ENCODE measurements at regions of chr10 and their contacts with region 1.

Region 1: GRCh38 chr10:117216611-117217195 is 19.4 kb downstream of the KCNK18 start:
- DNase-seq: no peak
- H3K4me3 ChIP-seq: peak overlapping the region; percentile 55
- H3K27me3 ChIP-seq: peaks cover 6% of the 10 kb centered on the region
- CTCF ChIP-seq: peak; percentile 100

Region 2: DNA sequence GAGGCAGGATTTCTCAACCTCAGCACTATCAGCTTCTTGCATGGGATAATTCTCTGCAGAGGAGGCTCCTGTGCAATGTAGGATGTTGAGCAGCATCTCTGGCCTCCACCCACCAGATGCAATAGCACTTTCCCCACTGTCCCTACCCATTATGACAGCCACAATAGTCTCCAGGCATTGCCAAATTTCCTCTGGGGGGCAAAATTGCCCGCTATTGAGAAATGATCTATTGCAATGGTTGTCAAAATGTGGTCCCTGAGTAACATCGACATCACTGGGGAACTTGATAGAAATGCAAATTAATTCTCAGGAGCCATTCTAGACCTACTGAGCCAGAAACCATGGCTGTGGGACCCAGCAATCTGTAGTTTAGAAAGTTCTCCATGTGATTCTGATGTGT is 12.4 kb before region 1 on chr10:
- CTCF ChIA-PET with region 1: interaction called, 20 read pairs
- POLR2A ChIA-PET with region 1: no interaction called
- DNase-seq: no peak
- H3K4me3 ChIP-seq: no peak overlapping the region
- H3K27me3 ChIP-seq: no peaks in the 10 kb centered on the region; the same call in 1 of the 2 replicates
- CTCF ChIP-seq: no peak

Region 3: GRCh38 chr10:117241541-117242462 is 25.1 kb after region 1 on chr10:
- CTCF ChIA-PET with region 1: interaction called, 27 read pairs
- POLR2A ChIA-PET with region 1: no interaction called
- DNase-seq: no peak
- H3K4me3 ChIP-seq: no peak overlapping the region
- H3K27me3 ChIP-seq: peaks cover 8% of the 10 kb centered on the region
- CTCF ChIP-seq: no peak

Region 4: GRCh38 chr10:117320050-117320665 is 103.5 kb after region 1 on chr10:
- CTCF ChIA-PET with region 1: interaction called, 124 read pairs
- POLR2A ChIA-PET with region 1: interaction called, 6 read pairs
- DNase-seq: no peak
- H3K4me3 ChIP-seq: no peak overlapping the region
- H3K27me3 ChIP-seq: no peaks in the 10 kb centered on the region
- CTCF ChIP-seq: peak; percentile 64

Region 5: GRCh38 chr10:117431160-117431559 is 214.5 kb after region 1 on chr10:
- CTCF ChIA-PET with region 1: interaction called, 13 read pairs
- POLR2A ChIA-PET with region 1: no interaction called
- DNase-seq: no peak
- H3K4me3 ChIP-seq: no peak overlapping the region
- H3K27me3 ChIP-seq: peaks cover 8% of the 10 kb centered on the region; the same call in 1 of the 2 replicates
- CTCF ChIP-seq: peak; percentile 31; the same call in 1 of the 2 replicates

Region 6: DNA sequence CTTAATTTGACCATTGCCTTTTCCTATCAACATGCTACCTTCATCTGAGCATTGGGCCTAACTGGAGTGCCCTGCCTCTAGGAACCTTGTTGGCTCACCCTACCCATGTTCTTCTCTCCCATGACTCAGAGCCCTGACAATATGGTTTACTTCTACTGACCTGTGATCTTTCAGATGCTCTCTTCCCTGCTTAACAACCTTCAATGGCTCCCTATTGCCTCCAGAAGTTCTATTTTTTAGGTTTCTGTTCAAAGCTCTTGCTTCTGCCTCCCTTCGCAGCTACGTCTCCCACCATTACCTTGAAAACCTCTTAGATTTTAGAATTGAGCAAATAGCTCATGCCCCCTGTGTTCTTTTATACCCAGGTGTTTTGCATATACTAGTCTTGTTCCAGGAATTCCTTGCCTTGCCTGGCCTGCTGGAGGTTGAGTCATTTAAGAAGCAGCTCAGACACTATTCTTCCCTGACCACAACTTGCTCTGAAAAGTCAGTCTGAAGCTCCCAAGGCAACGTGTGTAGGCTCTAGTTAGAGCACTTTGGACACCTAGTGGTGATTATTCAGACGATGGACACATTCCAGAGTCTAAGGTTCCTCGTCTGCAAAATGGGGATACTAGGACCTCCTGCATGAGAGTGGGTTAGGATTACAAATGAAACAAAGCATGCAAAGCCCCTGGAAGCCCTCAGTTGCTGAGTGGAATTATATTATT is 261.4 kb after region 1 on chr10:
- CTCF ChIA-PET with region 1: interaction called, 23 read pairs
- POLR2A ChIA-PET with region 1: no interaction called
- DNase-seq: no peak
- H3K4me3 ChIP-seq: no peak overlapping the region
- H3K27me3 ChIP-seq: peaks cover under 1% of the 10 kb centered on the region
- CTCF ChIP-seq: peak; percentile 47